Ascending aorta (tissue), 2 donors: ENCODE measurements at regions of chr4 and their contacts with region 1.

Region 1: DNA sequence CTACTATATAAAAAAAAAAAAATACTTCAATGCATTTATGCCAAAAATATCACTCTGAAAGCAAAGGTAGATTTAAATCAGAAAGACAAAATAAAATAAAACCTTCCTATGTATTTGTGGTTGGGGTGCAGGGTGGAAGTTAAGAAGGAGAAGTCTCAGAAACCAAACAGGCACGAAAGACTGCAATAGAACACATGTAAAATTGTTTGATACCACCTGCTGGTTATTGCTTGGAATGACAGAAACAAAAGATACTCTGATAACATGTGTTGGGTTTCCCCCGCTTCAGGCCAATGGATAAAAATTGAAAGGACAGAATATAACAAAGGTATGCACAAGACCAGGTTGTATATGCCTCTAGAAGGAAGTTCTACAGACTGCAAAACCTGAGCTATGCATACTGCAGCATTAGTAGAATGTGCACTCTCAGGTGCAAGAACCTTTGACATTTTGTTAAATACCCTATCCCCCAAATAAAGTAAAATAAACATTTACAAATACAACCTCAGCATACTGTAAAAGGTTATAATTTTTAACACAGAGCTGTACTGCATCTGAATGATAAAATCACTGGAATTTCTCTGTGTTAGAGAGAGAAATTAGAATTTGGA is 118.8 kb downstream of the GABRA2 start:
- DNase-seq: no peak
- H3K4me3 ChIP-seq: no peak overlapping the region
- H3K27ac ChIP-seq: no peak overlapping the region
- H3K4me1 ChIP-seq: no peaks in the 10 kb centered on the region
- H3K27me3 ChIP-seq: no peaks in the 10 kb centered on the region
- CTCF ChIP-seq: peak in 1 of 3 experiments; percentile 11

Region 2: DNA sequence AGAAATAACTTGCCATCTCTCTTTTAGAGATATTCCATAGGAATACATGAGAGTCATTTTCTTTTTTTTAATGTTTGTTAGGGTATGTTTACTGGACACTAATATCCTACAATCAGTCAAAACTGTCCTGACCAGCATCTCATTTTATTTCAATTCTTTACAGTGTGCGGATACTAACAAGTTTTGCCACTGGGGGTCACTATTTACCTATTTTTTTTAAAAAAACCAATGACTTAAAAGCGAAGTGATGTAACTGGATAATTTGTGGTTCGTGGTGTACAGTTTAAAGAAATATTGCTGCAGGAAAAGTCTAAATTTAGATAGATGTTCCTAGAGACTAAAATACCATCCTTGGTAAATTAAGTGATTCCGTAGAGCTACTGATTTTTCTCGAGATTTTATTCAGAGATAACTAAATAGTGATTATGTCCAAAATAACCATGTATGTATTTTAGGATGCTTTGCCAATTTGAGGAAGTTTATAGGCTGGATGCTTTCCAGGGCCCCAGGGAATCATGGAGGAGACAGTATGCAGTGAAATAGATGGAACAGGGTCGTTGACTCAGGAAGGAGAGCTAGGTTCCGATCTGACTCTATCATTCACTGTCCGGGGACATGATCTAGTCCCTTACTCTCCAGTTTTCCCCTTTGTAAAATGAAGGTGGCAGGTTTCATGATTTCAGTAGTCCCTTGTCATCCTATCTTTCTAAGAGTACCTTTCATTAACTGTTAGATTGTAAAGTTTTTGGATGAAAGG is 1510.8 kb before region 1 on chr4:
- intact Hi-C with region 1: loop called (anchors 5 kb)
- DNase-seq: no peak
- H3K4me3 ChIP-seq: no peak overlapping the region
- H3K27ac ChIP-seq: no peak overlapping the region
- H3K4me1 ChIP-seq: no peaks in the 10 kb centered on the region
- H3K27me3 ChIP-seq: no peaks in the 10 kb centered on the region
- CTCF ChIP-seq: peak in 2 of 3 experiments; percentile 48 to 49

Region 3: GRCh38 chr4:45831692-45832091 is 439.4 kb before region 1 on chr4:
- intact Hi-C with region 1: no loop called
- DNase-seq: no peak
- H3K4me3 ChIP-seq: no peak overlapping the region
- H3K27ac ChIP-seq: no peak overlapping the region
- H3K4me1 ChIP-seq: no peaks in the 10 kb centered on the region
- H3K27me3 ChIP-seq: no peaks in the 10 kb centered on the region
- CTCF ChIP-seq: no peak